GM12878 (cell line): ENCODE measurements at regions of chr1 and their contacts with region 1.

Region 1: GRCh38 chr1:59947047-59947938 is 20.7 kb upstream of the CYP2J2 start:
- DNase-seq: peak; percentile 4
- ATAC-seq: peak; percentile 95
- H3K4me3 ChIP-seq: no peak overlapping the region
- H3K27ac ChIP-seq: no peak overlapping the region
- H3K4me1 ChIP-seq: no peaks in the 10 kb centered on the region
- H3K27me3 ChIP-seq: no peaks in the 10 kb centered on the region
- CTCF ChIP-seq: peak; percentile 89 to 95 (median 93)
- EP300 ChIP-seq: no peak
- POLR2A ChIP-seq: no peak
- RAD21 ChIP-seq: peak; percentile 90

Region 2: GRCh38 chr1:59759156-59759925 is 188.0 kb before region 1 on chr1:
- CTCF ChIA-PET with region 1: interaction called, 5 read pairs
- POLR2A ChIA-PET with region 1: no interaction called
- RAD21 ChIA-PET with region 1: interaction called, 13 read pairs
- SMC1A ChIA-PET with region 1: interaction called, 15 read pairs
- in situ Hi-C with region 1: no loop called
- intact Hi-C with region 1: no loop called
- DNase-seq: peak; percentile 46
- ATAC-seq: peak; percentile 98
- H3K4me3 ChIP-seq: no peak overlapping the region
- H3K27ac ChIP-seq: no peak overlapping the region
- H3K4me1 ChIP-seq: no peaks in the 10 kb centered on the region
- H3K27me3 ChIP-seq: no peaks in the 10 kb centered on the region
- CTCF ChIP-seq: peak; percentile 91 to 97 (median 96)
- EP300 ChIP-seq: no peak
- POLR2A ChIP-seq: no peak
- RAD21 ChIP-seq: peak; percentile 98

Region 3: DNA sequence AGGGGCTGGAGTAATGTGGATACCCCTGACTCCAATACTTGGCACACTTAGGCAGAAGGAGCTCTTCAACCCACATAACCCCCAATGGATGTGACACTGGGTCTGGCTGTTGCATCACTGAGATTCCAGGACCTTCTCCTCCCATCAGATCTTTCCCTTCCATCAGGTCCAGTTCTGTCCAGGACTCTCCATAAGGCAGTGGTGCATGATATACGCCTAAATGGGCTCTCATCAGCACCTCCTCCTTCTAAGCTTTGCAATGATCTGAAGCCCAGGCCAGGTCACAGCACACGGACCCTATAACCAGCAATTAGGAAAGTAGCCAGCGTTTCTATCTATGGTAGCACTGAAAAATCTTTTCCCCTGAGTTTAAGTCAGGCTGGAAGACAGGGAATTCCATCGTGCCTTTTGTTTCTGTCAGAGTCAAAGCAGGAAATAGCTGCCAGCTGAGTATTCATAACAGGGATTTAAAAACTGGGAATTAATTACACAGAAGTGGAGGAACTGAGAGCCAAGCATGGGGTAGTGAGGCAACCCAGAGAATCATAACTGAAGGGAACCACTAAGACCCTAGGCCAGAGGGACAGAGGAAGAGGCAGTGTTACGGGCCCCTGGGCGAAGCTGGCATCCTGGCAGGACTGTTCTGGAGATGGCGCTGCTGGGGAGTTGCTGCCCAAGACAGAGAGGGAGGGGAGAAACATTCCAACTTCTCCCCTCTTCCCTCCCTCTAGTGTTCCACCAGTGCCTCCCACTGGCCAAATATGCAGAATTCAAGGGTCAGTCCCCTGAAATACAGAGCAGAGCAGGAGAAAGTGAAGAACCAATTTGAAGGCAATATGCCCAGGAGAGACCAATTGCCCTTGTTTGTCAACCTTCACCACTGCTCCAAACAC is 170.1 kb before region 1 on chr1:
- CTCF ChIA-PET with region 1: interaction called, 19 read pairs
- POLR2A ChIA-PET with region 1: no interaction called
- RAD21 ChIA-PET with region 1: no interaction called
- SMC1A ChIA-PET with region 1: interaction called, 3 read pairs
- in situ Hi-C with region 1: no loop called
- intact Hi-C with region 1: loop called (anchors 5 kb)
- DNase-seq: no peak
- ATAC-seq: no peak
- H3K4me3 ChIP-seq: no peak overlapping the region
- H3K27ac ChIP-seq: no peak overlapping the region
- H3K4me1 ChIP-seq: no peaks in the 10 kb centered on the region
- H3K27me3 ChIP-seq: no peaks in the 10 kb centered on the region
- CTCF ChIP-seq: no peak
- EP300 ChIP-seq: no peak
- POLR2A ChIP-seq: no peak
- RAD21 ChIP-seq: no peak

Region 4: DNA sequence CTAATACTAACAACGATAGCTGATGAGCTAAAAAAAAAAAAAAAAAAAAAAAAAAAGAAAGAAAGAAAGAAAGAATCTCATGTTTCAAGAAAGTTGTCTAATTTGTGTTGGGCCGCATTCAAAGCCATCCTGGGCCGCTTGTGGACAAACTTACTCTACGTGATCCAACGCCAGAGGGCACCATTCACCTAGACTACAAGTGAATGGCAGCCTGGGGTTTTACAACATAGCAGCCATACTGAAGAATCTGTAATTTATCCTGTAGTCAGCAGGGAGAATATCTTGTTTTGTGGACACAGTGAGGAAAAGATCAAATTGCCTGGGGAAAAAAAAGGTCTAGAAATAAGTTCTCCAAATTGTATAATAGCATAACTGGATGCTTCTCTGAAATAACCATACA is 67.7 kb before region 1 on chr1:
- CTCF ChIA-PET with region 1: interaction called, 94 read pairs
- POLR2A ChIA-PET with region 1: interaction called, 4 read pairs
- RAD21 ChIA-PET with region 1: interaction called, 54 read pairs
- SMC1A ChIA-PET with region 1: interaction called, 62 read pairs
- in situ Hi-C with region 1: no loop called
- intact Hi-C with region 1: loop called (anchors 1 kb)
- DNase-seq: no peak
- ATAC-seq: peak; percentile 89
- H3K4me3 ChIP-seq: no peak overlapping the region
- H3K27ac ChIP-seq: no peak overlapping the region
- H3K4me1 ChIP-seq: no peaks in the 10 kb centered on the region
- H3K27me3 ChIP-seq: no peaks in the 10 kb centered on the region
- CTCF ChIP-seq: peak; percentile 37 to 54 (median 46); a peak in 5 of 6 replicates
- EP300 ChIP-seq: no peak
- POLR2A ChIP-seq: no peak
- RAD21 ChIP-seq: peak; percentile 39

Region 5: DNA sequence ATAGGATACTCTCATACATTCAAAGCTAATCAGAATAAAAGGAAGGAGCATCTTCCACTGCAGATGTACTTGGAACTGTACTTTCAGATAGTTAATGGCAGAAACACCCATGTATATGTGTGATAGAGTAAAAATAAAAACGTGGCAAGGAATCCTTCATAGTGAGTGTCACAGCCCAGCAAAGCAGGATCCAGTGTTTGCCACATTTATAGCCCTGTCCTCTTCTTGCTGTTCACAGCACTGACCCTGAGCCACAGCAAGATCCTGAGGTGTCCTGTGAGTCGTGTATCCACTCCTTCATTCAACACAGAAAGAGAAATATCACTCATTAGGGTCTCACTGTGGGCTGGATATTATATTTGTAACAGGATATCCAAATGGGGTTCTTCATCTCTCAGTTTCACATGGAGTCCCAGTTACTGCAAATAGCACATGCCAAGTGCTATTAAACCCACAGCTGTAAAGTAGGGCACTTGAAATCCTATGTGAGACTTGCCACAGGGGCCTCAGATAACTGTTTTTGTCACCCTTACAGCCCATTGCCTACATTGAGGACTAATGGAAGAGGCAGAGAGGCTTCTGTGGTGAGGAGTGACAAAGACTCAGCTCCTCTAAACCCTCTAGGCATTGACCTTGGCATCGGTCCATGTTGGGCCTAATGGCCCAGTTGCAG is 62.0 kb before region 1 on chr1:
- CTCF ChIA-PET with region 1: interaction called, 94 read pairs
- POLR2A ChIA-PET with region 1: interaction called, 4 read pairs
- RAD21 ChIA-PET with region 1: interaction called, 54 read pairs
- SMC1A ChIA-PET with region 1: interaction called, 62 read pairs
- in situ Hi-C with region 1: no loop called
- intact Hi-C with region 1: no loop called
- DNase-seq: no peak
- ATAC-seq: no peak
- H3K4me3 ChIP-seq: no peak overlapping the region
- H3K27ac ChIP-seq: no peak overlapping the region
- H3K4me1 ChIP-seq: no peaks in the 10 kb centered on the region
- H3K27me3 ChIP-seq: no peaks in the 10 kb centered on the region
- CTCF ChIP-seq: no peak
- EP300 ChIP-seq: no peak
- POLR2A ChIP-seq: no peak
- RAD21 ChIP-seq: no peak

Region 6: GRCh38 chr1:59903141-59903754 is 44.0 kb before region 1 on chr1:
- CTCF ChIA-PET with region 1: interaction called, 29 read pairs
- POLR2A ChIA-PET with region 1: no interaction called
- RAD21 ChIA-PET with region 1: interaction called, 11 read pairs
- SMC1A ChIA-PET with region 1: interaction called, 16 read pairs
- in situ Hi-C with region 1: no loop called
- intact Hi-C with region 1: loop called (anchors 1 kb)
- DNase-seq: no peak
- ATAC-seq: peak; percentile 85
- H3K4me3 ChIP-seq: no peak overlapping the region
- H3K27ac ChIP-seq: no peak overlapping the region
- H3K4me1 ChIP-seq: no peaks in the 10 kb centered on the region
- H3K27me3 ChIP-seq: no peaks in the 10 kb centered on the region
- CTCF ChIP-seq: peak; percentile 39 to 48 (median 40); a peak in 4 of 6 replicates
- EP300 ChIP-seq: no peak
- POLR2A ChIP-seq: no peak
- RAD21 ChIP-seq: no peak

Region 7: DNA sequence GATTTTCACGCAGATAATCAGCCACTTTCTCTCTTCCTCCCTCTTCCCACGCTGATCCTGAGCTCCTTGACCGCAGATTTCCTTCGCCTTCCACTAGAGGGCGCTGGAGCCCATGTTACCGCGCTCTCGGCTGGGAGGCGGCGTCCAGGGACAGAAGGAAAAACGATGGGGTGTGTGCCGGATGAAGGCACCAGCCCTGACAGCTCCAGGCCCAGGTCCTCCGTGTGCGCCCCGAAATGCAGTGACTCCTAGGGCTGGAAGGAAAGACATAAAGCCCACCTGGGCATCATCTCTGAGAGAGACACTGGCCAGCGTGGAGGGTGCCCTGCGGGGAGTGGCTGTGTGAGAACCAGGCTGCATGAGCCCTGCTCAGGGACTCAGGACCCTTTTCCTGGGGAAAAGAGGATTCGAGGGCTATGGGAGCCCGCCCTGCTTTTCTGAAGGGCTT is 24.2 kb after region 1 on chr1:
- CTCF ChIA-PET with region 1: interaction called, 29 read pairs
- POLR2A ChIA-PET with region 1: no interaction called
- RAD21 ChIA-PET with region 1: interaction called, 9 read pairs
- SMC1A ChIA-PET with region 1: interaction called, 4 read pairs
- in situ Hi-C with region 1: no loop called
- intact Hi-C with region 1: no loop called
- DNase-seq: no peak
- ATAC-seq: peak; percentile 86
- H3K4me3 ChIP-seq: no peak overlapping the region
- H3K27ac ChIP-seq: no peak overlapping the region
- H3K4me1 ChIP-seq: no peaks in the 10 kb centered on the region
- H3K27me3 ChIP-seq: no peaks in the 10 kb centered on the region
- CTCF ChIP-seq: peak; percentile 87 to 90 (median 90)
- EP300 ChIP-seq: no peak
- POLR2A ChIP-seq: no peak
- RAD21 ChIP-seq: peak; percentile 68

Region 8: DNA sequence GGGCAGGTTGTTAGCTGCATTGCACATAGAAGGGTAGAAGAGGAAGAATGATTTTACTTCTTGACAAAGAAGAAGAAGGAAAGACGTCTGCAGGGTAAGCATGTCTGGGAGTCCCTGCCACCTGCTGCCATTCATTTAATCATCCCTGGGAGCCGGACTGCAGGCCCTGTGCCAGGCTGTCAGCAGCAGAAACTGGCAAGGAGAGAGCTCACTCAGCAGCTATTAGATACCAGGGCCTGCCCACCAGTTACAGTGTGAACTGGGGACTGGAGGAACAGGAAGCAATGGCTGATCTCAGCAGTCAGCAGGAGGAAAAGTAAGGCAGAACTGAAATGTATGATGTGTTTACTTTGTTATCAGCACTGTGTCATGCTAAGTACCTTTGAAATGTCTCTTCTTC is 202.0 kb after region 1 on chr1:
- CTCF ChIA-PET with region 1: no interaction called
- POLR2A ChIA-PET with region 1: no interaction called
- RAD21 ChIA-PET with region 1: no interaction called
- SMC1A ChIA-PET with region 1: no interaction called
- in situ Hi-C with region 1: no loop called
- intact Hi-C with region 1: no loop called
- DNase-seq: no peak
- ATAC-seq: no peak
- H3K4me3 ChIP-seq: no peak overlapping the region
- H3K27ac ChIP-seq: no peak overlapping the region
- H3K4me1 ChIP-seq: no peaks in the 10 kb centered on the region
- H3K27me3 ChIP-seq: no peaks in the 10 kb centered on the region; a peak in 1 of 4 replicates
- CTCF ChIP-seq: no peak
- EP300 ChIP-seq: no peak
- POLR2A ChIP-seq: no peak
- RAD21 ChIP-seq: no peak